Common myeloid progenitor, CD34-positive (primary cell): ENCODE measurements at regions of chr16 and their contacts with region 1.

Region 1: DNA sequence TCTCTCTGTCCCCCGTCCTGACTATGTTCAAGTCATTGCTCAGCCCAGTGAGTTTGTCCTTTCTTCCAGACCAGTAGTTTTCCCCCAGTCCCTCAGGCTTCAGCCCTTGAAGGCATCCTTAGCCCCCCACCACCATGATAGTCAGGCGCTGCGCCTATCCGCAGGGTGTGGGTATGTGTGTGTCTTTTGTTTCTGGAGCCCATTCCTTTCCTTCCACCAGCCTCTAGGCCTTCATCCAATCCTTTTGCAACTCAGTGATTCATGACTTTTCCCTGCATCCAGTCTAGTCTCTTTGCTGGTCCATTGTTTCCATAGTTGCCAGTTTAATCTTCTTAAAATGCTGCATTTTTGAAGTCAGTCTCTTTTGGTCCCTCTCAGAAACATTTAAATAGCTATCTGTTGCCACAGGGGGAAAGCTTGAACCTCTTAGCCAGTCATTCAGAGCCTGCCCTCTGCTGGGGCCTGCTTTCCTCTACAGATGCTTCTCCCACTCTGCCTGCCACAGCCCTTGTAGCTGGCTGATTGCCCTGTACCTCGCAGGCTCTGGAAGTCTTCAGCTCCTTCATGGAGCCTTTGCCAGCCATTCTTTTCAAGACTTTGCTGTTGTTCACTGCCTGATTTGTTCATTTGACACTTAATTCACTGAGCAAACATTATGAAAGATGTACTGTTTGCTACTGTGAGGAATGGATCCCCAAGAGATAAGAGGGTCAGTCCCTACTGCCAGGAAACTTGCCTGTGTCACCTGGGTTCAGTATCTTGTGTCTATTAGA is 55.9 kb upstream of the ADCY7 start:
- DNase-seq: peak; percentile 82 to 89 (median 89)
- H3K4me3 ChIP-seq: no peak overlapping the region
- H3K27ac ChIP-seq: no peak overlapping the region
- H3K4me1 ChIP-seq: peaks cover 4 to 27% (median 13%) of the 10 kb centered on the region in 4 experiments
- H3K27me3 ChIP-seq: no peaks in the 10 kb centered on the region

Region 2: DNA sequence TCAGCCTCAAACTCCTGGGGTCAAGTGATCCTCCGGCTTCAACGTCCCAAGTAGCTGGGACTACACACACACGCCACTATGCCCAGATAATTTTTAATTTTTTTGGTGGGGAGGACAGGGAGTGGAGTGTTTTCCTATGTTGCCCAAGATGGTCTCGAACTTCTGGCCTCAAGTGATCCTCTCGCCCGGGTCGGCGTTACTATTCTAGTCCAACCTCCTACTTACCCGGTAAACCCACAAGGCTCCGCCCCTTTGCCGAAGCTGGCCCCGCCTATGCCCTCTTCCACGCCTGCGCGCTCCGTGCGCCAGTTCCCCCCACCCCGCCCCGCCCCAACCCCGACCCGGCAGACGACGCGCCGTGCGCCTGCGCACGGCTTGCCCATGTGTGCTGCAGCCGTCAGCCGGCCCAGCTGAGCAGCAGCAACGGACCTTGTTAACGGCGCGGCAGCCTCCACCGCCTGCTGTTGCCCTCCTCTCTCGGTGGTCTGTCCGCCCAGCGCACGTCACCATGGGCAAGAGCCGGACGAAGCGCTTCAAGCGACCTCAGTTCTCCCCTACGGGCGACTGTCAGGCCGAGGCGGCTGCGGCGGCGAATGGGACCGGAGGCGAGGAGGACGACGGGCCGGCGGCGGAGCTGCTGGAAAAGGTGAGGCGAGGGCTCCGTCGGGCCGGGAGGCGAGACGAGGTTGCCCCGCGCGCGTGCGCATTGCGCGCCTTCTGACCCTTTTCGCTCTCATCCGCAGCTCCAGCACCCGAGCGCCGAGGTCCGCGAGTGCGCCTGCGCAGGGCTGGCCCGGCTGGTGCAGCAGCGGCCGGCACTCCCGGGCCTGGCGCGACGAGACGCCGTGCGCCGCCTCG is 144.6 kb before region 1 on chr16 and contains the start of gene HEATR3:
- CTCF ChIA-PET with region 1: interaction called, 98 read pairs
- POLR2A ChIA-PET with region 1: interaction called, 8 read pairs
- DNase-seq: peak; percentile 89 to 95 (median 95)
- H3K4me3 ChIP-seq: peak within 1 kb of the TSS; percentile 80 to 91 (median 83)
- H3K27ac ChIP-seq: peak within 1 kb of the TSS in 1 of 2 experiments; percentile 54
- H3K4me1 ChIP-seq: peaks cover 1 to 22% (median 20%) of the 10 kb centered on the region in 4 experiments
- H3K27me3 ChIP-seq: no peaks in the 10 kb centered on the region

Region 3: GRCh38 chr16:50195276-50195675 is 15.2 kb before region 1 on chr16:
- CTCF ChIA-PET with region 1: interaction called, 46 read pairs
- POLR2A ChIA-PET with region 1: no interaction called
- DNase-seq: no peak
- H3K4me3 ChIP-seq: no peak overlapping the region
- H3K27ac ChIP-seq: no peak overlapping the region
- H3K4me1 ChIP-seq: peaks cover 2 to 19% (median 12%) of the 10 kb centered on the region in 4 experiments
- H3K27me3 ChIP-seq: no peaks in the 10 kb centered on the region

Region 4: GRCh38 chr16:50354629-50355456 is 144.4 kb after region 1 on chr16:
- CTCF ChIA-PET with region 1: interaction called, 44 read pairs
- POLR2A ChIA-PET with region 1: no interaction called
- DNase-seq: peak; percentile 30 to 58 (median 55)
- H3K4me3 ChIP-seq: no peak overlapping the region
- H3K27ac ChIP-seq: peak overlapping the region in 1 of 2 experiments; percentile 38
- H3K4me1 ChIP-seq: no peaks in the 10 kb centered on the region
- H3K27me3 ChIP-seq: no peaks in the 10 kb centered on the region

Region 5: GRCh38 chr16:50806099-50807062 is 595.9 kb after region 1 on chr16:
- CTCF ChIA-PET with region 1: interaction called, 18 read pairs
- POLR2A ChIA-PET with region 1: no interaction called
- DNase-seq: peak; percentile 91 to 96 (median 94)
- H3K4me3 ChIP-seq: peak overlapping the region; percentile 8 to 79 (median 45)
- H3K27ac ChIP-seq: no peak overlapping the region
- H3K4me1 ChIP-seq: peaks cover 0 to 10% (median 7%) of the 10 kb centered on the region in 4 experiments
- H3K27me3 ChIP-seq: peaks cover 0 to 2% (median 0%) of the 10 kb centered on the region in 5 experiments